Activated T-helper 1 cell treated with anti-CD3 and anti-CD28 coated beads, Interleukin-12 subunit alpha, Interleukin-12 subunit beta, Interleukin-2, Interleukin-4 antibody, amounts not matched to agents 30 ng/mL and 10 ng/mL and 1 ng/mL, durations not matched to agents 14 hours and 24 hours and 36 hours (primary cell): ENCODE measurements at regions of chr2 and their contacts with region 1.

Region 1: DNA sequence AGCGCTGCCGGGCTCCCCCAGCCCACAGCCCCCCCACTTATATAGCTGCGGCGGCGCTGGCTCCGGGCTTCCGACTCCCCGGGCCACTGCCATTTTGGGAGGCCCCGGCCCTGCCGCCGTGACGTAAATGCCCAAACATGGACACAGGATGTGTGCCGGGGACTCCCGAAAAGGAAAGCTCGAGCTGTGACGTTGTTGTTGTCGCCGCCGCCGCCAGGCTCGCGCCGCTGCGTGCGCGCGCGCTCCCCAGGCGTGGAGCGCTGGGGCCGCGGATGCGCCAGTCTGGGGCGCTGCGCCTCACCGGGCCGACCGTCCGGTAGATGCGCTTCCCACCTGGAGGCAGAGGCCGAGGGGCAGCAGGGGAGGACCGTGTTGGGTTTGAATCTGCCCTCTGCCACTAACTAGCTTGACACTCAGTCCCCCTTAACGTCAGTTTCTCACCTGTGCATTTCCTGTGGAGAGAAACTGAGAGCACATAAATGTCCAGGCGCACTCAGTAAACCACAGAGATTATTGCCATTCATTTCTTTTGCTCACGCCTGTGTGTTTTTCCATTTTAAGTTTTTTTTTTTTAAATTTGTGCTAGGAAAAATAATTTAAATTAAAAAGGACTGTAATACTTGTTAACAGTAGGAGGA is at the start of gene EGR4:
- DNase-seq: peak; percentile 91
- H3K4me3 Mint-ChIP-seq: peak within 1 kb of the TSS; percentile 75
- H3K27ac Mint-ChIP-seq: peak within 1 kb of the TSS; percentile 63
- H3K4me1 Mint-ChIP-seq: peaks cover 14% of the 10 kb centered on the region
- H3K27me3 Mint-ChIP-seq: peaks cover 72% of the 10 kb centered on the region
- total RNA-seq, gene EGR4: 1.9 TPM in 2 replicates

Region 2: DNA sequence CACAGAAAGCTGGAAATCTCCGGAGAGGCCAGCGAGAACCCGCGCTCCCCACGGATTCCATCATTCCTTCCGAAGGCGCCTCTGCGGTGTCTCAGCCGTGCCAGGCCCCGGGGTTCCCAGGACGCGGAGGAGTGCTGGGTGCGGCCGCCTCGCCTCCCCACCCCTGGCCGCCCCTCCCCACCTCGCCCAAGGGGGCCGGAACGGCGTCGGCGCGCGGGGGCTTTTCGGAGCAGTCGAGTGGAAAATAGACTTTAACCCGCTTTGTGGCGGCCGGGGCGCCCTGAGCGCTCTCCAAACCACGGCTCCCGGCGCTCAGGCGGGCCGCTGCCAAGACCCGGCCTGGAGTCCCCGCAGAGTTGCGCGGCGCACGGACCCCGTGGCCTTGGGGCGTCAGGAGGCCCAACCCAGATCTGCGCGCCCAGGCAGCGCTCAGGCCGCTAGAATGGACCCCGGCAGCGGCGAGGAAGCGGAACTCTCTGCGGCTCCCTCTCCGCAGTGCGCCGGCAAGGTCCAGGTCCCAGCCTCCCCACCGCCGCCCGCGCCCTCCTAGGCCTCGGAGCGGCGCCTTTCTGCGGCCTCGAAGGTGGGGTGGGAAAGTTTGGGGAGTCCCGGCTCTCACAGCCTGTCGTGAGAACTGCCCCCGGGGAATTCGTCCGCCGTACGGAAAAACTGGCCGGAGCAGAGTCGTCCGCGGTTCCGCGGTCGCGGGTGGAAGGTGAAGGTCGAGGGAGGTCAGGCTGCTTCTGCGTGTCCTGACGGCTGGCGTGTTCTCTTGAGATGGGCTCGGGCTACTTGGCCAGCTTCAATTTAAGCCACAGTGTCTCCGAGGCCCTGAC is 377.5 kb before region 1 on chr2:
- intact Hi-C with region 1: loop called (anchors 10 kb)
- DNase-seq: no peak
- H3K4me3 Mint-ChIP-seq: no peak overlapping the region
- H3K27ac Mint-ChIP-seq: no peak overlapping the region
- H3K4me1 Mint-ChIP-seq: peaks cover 18% of the 10 kb centered on the region
- H3K27me3 Mint-ChIP-seq: peaks cover 68% of the 10 kb centered on the region

Region 3: GRCh38 chr2:73112913-73113633 is 180.6 kb before region 1 on chr2 and contains the start of gene RAB11FIP5:
- intact Hi-C with region 1: loop called (anchors 2 kb)
- DNase-seq: peak; percentile 81
- H3K4me3 Mint-ChIP-seq: peak within 1 kb of the TSS; percentile 84
- H3K27ac Mint-ChIP-seq: peak within 1 kb of the TSS; percentile 46
- H3K4me1 Mint-ChIP-seq: peaks cover 25% of the 10 kb centered on the region
- H3K27me3 Mint-ChIP-seq: peaks cover 14% of the 10 kb centered on the region
- total RNA-seq, gene RAB11FIP5: 12.1 and 12.9 TPM in 2 replicates

Region 4: DNA sequence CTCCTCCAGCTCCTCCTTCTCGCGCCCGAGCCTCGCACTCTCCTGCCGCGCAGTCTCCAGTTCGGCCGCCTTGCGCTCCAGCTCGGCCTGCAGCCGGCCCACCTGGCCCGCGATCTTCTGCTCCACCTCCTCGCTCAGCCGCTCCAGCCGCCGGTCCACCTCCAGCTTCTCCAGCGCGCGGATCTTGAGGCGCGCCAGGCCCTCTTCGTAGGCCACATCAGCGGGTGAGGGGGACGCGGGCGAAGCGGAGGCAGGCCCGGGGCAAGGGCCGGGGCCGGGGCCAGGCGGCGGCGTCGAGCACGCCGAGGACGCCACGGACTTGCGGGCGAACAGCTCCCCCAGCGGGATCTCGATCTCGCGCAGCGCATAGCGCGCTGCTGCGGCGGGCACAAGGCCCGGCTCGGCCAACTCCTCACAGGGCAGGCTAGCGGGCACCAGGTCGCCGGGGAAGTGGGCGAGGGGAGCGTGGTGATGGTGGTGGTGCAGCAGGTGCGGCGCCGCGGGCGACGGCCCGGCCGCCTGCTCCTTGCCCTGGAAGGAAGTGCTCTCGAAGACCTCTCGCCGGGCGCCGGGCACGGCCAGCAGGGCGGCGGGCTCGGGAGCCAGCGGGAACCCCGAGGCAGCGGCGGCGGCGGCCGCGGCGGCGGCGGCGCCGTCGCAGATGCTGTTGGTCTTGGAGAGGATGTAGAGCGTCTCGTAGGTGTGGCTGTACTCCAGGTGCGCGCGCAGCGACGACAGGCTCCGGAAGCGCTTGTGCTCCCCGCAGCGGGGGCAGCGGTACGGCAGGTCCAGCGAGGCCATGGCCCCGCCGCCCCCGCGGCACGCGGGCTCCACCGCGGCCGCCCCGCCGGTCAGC is 24.6 kb before region 1 on chr2:
- intact Hi-C with region 1: loop called (anchors 1 kb)
- DNase-seq: peak; percentile 73
- H3K4me3 Mint-ChIP-seq: no peak overlapping the region
- H3K27ac Mint-ChIP-seq: no peak overlapping the region
- H3K4me1 Mint-ChIP-seq: peaks cover 29% of the 10 kb centered on the region
- H3K27me3 Mint-ChIP-seq: no peaks in the 10 kb centered on the region

Region 5: DNA sequence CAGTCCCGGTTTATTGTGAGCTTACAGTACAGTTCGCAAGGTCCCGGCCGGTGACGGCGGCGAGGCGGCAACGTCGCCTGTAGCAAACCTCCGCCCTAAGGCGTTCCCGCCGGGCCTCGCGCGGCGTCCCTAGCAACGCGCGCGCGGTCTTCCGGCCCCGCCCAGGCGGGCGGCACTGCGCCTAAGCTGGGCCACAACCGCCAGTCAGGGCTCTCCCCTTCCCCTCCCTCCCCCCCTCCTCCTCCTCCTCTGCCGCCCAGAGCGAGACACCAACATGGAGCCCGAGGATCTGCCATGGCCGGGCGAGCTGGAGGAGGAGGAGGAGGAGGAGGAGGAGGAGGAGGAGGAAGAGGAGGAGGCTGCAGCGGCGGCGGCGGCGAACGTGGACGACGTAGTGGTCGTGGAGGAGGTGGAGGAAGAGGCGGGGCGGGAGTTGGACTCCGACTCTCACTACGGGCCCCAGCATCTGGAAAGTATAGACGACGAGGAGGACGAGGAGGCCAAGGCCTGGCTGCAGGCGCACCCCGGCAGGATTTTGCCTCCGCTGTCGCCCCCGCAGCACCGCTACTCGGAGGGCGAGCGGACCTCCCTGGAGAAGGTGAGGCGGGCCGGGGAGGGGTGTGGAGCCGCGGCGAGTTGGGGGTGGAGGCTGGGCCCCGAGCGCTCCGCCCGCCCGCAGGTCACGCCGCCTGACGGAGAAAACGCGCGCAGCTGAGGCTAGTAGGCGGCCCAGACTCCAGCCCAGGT is 92.1 kb after region 1 on chr2 and contains the start of gene ALMS1:
- intact Hi-C with region 1: loop called (anchors 1 kb)
- DNase-seq: peak; percentile 88
- H3K4me3 Mint-ChIP-seq: peak within 1 kb of the TSS; percentile 92
- H3K27ac Mint-ChIP-seq: peak within 1 kb of the TSS; percentile 90
- H3K4me1 Mint-ChIP-seq: peaks cover 37% of the 10 kb centered on the region
- H3K27me3 Mint-ChIP-seq: no peaks in the 10 kb centered on the region
- total RNA-seq, gene ALMS1: 18.2 and 19.4 TPM in 2 replicates

Region 6: DNA sequence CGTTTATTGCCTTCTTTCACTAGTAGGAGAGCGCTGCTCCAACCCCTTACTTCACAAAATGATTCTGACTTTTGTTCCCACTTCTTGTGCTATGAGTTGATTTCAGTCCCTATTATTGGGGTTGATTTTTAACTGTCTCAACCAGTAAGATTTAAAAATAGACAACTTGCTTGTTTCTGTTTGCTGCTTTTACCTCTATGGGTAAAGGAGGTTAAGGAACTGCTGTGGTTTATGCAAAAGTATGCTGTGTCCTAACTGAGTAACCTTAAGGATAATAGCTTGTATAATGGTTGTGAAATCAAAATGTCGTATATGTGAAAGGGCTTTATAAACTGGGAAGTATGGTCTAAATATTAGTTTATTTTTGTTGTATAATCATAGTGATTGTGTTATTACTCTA is 114.5 kb after region 1 on chr2:
- intact Hi-C with region 1: no loop called
- DNase-seq: no peak
- H3K4me3 Mint-ChIP-seq: no peak overlapping the region
- H3K27ac Mint-ChIP-seq: no peak overlapping the region
- H3K4me1 Mint-ChIP-seq: no peaks in the 10 kb centered on the region
- H3K27me3 Mint-ChIP-seq: no peaks in the 10 kb centered on the region